Activated CD4-positive, alpha-beta memory T cell treated with anti-CD3 and anti-CD28 coated beads for 36 hours (primary cell): ENCODE measurements at regions of chr6 and their contacts with region 1.

Region 1: GRCh38 chr6:29705389-29706231 is 17.6 kb upstream of the HLA-F start:
- DNase-seq: no peak
- H3K4me3 Mint-ChIP-seq: peak overlapping the region; percentile 6
- H3K27ac Mint-ChIP-seq: no peak overlapping the region
- H3K4me1 Mint-ChIP-seq: peaks cover 50% of the 10 kb centered on the region
- H3K27me3 Mint-ChIP-seq: peaks cover 13% of the 10 kb centered on the region

Region 2: DNA sequence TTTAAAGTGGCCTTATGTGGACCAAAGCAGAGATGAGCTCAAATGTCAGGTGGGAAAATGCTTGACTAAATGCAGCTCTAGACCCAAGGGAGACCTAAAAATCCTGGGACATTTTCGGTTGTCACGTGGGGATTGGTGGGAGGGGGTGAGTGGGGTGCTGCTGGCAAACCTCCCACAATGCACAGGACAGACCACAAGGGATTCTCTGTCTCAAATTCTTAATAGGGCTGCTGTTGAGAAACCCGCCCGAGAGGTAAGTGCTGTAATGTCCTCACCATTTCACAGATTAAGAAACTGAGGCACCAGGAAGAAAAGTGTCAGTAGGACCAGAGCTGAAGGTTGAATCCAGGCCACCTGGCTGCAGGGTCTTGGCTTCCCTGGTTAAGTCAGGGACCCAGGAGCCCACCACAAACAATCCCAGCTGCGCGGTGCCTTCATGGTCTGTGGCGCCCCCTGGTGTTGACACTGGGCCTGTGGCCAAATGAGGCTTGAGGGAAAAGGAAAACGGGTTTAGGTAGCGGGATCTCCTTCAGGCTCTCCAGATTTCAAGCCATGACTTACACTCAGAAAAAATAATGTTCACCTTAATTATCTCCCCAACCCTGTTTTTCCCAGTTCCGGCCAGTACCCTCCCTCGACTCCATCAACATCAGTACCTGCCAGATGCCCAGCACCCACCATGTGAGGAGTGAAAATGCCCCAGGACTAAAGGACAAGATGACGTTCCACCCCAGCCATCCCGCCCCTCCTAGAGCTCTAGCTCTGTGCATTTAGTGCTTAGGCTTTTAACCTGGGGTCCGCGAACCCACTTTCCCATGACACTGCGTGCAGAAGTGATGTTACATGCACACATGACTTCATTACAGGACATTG is 129.2 kb after region 1 on chr6:
- CTCF ChIA-PET with region 1: interaction called, 19 read pairs
- POLR2A ChIA-PET with region 1: no interaction called
- intact Hi-C with region 1: loop called (anchors 1 kb)
- DNase-seq: peak; percentile 65
- H3K4me3 Mint-ChIP-seq: no peak overlapping the region
- H3K27ac Mint-ChIP-seq: no peak overlapping the region
- H3K4me1 Mint-ChIP-seq: no peaks in the 10 kb centered on the region
- H3K27me3 Mint-ChIP-seq: peaks cover 38% of the 10 kb centered on the region

Region 3: DNA sequence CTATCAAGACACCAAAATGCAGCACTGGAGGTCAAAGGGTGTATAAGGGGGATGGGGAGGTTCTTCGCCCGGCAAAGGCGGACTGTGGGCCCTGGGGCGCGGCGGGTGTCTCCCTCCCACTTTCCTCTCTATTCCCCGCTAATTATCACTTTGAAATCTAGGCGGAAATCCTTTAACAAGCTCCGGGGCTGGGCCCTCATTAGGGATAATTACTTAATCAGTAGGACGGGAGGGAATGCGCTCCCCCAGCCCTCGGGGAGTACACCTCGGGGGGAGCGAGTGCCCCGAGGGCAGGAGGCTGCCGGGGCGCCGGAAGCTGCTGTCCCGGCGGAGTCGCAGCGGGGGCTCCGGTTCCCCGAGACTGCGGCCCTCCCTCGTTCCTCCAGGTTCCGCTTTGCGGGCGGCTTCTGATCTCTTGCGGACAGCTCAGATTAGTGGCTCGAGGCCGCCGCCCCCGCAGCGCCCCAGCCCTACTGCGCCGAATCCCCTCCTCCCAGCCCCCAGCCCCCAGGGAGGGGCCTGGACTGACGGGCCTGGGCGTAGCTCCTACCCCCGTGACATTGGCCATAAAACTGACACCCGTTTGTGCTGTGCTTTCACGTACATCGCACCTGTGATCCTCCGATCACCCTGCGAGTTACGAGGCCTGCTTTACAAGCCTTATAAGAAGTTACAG is 1249.9 kb after region 1 on chr6:
- CTCF ChIA-PET with region 1: no interaction called
- POLR2A ChIA-PET with region 1: no interaction called
- intact Hi-C with region 1: no loop called
- DNase-seq: peak; percentile 82
- H3K4me3 Mint-ChIP-seq: peak overlapping the region; percentile 66
- H3K27ac Mint-ChIP-seq: no peak overlapping the region
- H3K4me1 Mint-ChIP-seq: peaks cover 6% of the 10 kb centered on the region
- H3K27me3 Mint-ChIP-seq: peaks cover under 1% of the 10 kb centered on the region